CD4-positive, alpha-beta T cell (primary cell): ENCODE measurements at regions of chr1 and their contacts with region 1.

Region 1: GRCh38 chr1:93362237-93362636 is 16.5 kb downstream of the DR1 start:
- DNase-seq: no peak
- ATAC-seq: no peak
- H3K4me3 ChIP-seq: no peak overlapping the region
- H3K4me3 Mint-ChIP-seq: no peak overlapping the region
- H3K27ac ChIP-seq: no peak overlapping the region
- H3K27ac Mint-ChIP-seq: no peak overlapping the region
- H3K4me1 ChIP-seq: peaks cover 13% of the 10 kb centered on the region
- H3K4me1 Mint-ChIP-seq: peaks cover 61% of the 10 kb centered on the region
- H3K27me3 ChIP-seq: no peaks in the 10 kb centered on the region
- H3K27me3 Mint-ChIP-seq: no peaks in the 10 kb centered on the region
- CTCF ChIP-seq: no peak

Region 2: DNA sequence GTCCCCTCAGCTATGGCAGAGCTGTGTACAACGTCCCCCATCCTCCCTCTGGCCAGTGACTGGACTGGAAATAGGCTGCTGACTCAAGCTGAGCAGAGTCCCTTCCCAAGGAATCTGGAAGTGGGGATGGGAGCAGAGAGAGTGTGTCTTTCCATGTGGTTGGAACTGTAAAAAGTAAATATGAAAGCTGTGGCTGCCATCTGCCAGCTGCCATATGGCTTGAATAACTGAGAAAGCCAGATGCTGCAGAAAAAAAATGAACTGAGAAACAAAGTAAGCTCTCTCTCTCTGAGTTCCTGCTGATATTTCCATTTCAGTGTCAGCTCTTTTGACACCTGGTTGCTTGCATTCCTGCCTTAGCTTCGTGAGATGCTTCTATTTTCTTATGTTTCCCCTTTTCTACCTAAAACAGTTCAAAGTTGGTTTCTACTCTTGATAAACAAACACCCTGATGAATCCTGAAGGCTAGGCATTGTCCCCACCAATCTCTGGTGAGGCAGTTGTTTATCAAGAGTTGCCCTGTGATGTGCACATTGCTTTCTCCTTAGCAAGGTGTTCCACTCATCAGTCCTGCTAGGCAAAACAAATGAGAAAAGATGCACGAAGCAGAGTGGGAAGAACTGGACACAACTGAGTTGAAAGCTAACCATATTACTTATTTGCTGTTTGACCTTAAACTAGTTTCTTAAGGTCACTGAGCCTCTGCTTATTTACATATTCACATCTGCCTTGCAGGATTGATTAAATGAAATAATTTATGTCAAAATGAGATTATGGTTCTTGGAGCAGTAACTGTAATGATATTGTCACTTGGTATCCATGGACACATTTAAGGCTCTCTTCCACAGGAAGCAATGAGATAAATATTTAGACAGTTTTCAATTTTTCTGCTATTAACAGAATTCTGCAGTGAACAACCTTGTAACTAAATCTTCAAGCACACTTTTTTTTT is 33.2 kb before region 1 on chr1:
- CTCF ChIA-PET with region 1: interaction called, 3 read pairs
- POLR2A ChIA-PET with region 1: no interaction called
- intact Hi-C with region 1: loop called in 1 of 2 experiments (anchors 5 kb)
- DNase-seq: no peak
- ATAC-seq: no peak
- H3K4me3 ChIP-seq: no peak overlapping the region
- H3K4me3 Mint-ChIP-seq: no peak overlapping the region
- H3K27ac ChIP-seq: no peak overlapping the region
- H3K27ac Mint-ChIP-seq: no peak overlapping the region
- H3K4me1 ChIP-seq: no peaks in the 10 kb centered on the region
- H3K4me1 Mint-ChIP-seq: no peaks in the 10 kb centered on the region
- H3K27me3 ChIP-seq: no peaks in the 10 kb centered on the region
- H3K27me3 Mint-ChIP-seq: no peaks in the 10 kb centered on the region
- CTCF ChIP-seq: no peak